Gastrocnemius medialis (tissue), 4 donors: ENCODE measurements at regions of chr1 and their contacts with region 1.

Region 1: DNA sequence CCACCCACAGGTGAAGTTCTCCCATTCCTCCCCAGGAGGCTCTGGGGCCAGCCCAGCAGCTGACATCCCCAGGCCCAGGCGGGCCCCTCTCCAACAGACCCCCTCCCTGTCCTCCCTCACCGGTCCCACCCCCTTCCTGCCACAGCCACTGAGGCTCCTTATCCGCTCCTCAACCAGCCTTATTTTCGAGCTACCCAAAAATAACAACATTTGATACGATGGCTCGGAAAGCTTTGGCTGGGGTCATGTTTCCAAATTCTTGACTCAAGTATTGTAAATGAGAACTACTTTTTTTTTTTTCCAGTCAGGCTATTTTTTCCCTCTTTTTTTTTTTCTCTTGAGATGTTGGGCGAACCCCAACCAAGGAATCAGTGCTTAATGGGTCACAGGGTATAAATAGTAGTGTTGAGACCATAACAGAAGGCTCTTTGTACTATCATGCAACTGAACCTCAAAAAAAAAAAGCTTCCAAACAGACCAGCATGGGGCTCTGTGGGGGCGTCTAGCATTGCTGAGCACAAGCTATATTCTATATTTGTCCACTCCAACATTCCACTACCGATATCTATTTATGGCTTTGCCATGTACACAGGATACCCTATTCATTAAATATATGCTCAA is 27.2 kb downstream of the IRF2BP2 start:
- DNase-seq: peak in 1 of 2 donors; percentile 59
- ATAC-seq: peak; percentile 39 to 48
- H3K4me3 ChIP-seq: peak overlapping the region; percentile 15 to 25 (median 20)
- H3K27ac ChIP-seq: peak overlapping the region; percentile 93 to 97 (median 95)
- H3K4me1 ChIP-seq: peaks cover 58 to 63% of the 10 kb centered on the region in 2 donors
- H3K27me3 ChIP-seq: no peaks in the 10 kb centered on the region
- CTCF ChIP-seq: no peak
- POLR2A ChIP-seq: peak in 1 of 2 donors; percentile 24

Region 2: DNA sequence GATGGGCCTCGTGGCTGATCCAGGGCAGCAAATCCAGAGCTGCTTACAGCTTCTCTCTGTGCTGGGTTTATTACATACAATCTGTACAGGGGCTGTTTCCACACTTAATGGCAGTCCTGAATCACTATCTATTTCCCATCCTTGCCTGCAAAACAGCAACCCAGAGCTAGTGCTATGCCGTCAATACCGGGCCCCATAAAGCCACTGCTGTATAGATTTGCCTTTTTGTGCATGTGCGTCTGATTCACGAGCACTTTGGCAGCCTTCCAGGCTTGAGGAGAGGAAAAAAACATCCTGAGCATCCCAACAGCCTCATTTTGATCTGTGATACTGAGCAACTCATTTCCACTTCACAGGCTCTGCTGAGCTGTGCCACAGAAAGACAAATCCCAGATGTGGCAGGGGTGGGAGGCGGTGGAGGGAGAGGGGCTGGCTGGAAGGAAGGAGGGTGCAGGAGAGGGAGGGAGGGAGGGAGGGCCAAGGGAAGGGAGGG is 38.7 kb before region 1 on chr1:
- in situ Hi-C with region 1: no loop called
- intact Hi-C with region 1: loop called (anchors 1 kb)
- DNase-seq: peak; percentile 69 to 70
- ATAC-seq: peak; percentile 16 to 54
- H3K4me3 ChIP-seq: no peak overlapping the region
- H3K27ac ChIP-seq: peak overlapping the region; percentile 93 to 100 (median 98)
- H3K4me1 ChIP-seq: peaks cover 65 to 74% of the 10 kb centered on the region in 2 donors
- H3K27me3 ChIP-seq: no peaks in the 10 kb centered on the region
- CTCF ChIP-seq: no peak
- POLR2A ChIP-seq: peak in 1 of 2 donors; percentile 5

Region 3: GRCh38 chr1:234621657-234622335 is 39.0 kb after region 1 on chr1:
- in situ Hi-C with region 1: no loop called
- intact Hi-C with region 1: no loop called
- DNase-seq: no peak
- ATAC-seq: no peak
- H3K4me3 ChIP-seq: no peak overlapping the region
- H3K27ac ChIP-seq: peak overlapping the region; percentile 24 to 40 (median 26)
- H3K4me1 ChIP-seq: peaks cover 41 to 52% of the 10 kb centered on the region in 2 donors
- H3K27me3 ChIP-seq: no peaks in the 10 kb centered on the region
- CTCF ChIP-seq: no peak
- POLR2A ChIP-seq: no peak

Region 4: GRCh38 chr1:234670967-234671626 is 88.3 kb after region 1 on chr1:
- in situ Hi-C with region 1: no loop called
- intact Hi-C with region 1: no loop called
- DNase-seq: no peak
- ATAC-seq: no peak
- H3K4me3 ChIP-seq: no peak overlapping the region
- H3K27ac ChIP-seq: no peak overlapping the region
- H3K4me1 ChIP-seq: peaks cover 0 to 8% of the 10 kb centered on the region in 2 donors
- H3K27me3 ChIP-seq: no peaks in the 10 kb centered on the region
- CTCF ChIP-seq: no peak
- POLR2A ChIP-seq: no peak